ENCODE measurements at regions of chr13 and their contacts with region 1.

Region 1: GRCh38 chr13:81171065-81171647 is 830.2 kb upstream of the SPRY2 start:
- DNase-seq: no peak
- H3K4me3 ChIP-seq: no peak overlapping the region
- H3K27ac ChIP-seq: no peak overlapping the region
- H3K27me3 ChIP-seq: no peaks in the 10 kb centered on the region
- CTCF ChIP-seq: peak; percentile 66

Region 2: DNA sequence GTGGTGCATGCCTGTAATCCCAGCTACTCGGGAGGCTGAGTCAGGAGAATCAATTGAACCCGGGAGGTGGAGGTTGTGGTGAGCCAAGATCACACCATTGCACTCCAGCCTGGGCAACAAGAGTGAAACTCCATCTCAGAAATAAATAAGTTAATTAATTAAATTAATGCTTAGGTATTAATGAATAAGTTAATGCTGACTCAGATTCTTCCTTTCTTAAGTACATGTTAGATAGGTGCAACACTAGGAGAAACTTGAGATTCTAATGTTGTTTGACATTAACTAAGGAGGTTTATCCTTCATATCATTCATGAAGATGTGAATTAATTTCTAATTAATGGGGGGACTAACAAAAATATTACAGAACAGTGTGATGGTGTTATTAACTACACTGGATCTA is 17.7 kb before region 1 on chr13:
- CTCF ChIA-PET with region 1: no interaction called
- POLR2A ChIA-PET with region 1: no interaction called
- DNase-seq: no peak
- H3K4me3 ChIP-seq: no peak overlapping the region
- H3K27ac ChIP-seq: no peak overlapping the region
- H3K27me3 ChIP-seq: no peaks in the 10 kb centered on the region
- CTCF ChIP-seq: no peak

Region 3: DNA sequence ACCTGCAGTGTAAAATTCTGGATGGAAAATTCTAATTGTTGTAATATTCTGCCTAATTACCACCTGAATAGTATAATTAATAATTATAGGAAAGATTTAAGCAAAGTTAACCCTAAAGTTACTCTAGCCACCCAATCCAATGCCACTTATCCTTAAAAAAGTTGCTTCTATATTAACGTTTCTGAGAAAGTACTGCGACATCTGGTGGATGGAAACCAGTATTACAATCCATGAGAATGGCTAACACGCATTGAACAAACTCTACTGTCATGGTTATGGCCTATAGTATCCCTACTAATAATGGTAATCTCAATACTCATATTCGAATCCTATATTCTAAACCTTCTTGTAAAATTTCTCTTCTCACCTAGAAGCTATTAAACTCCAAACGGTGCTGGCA is 1159.3 kb after region 1 on chr13:
- CTCF ChIA-PET with region 1: interaction called, 27 read pairs
- POLR2A ChIA-PET with region 1: no interaction called
- DNase-seq: no peak
- H3K4me3 ChIP-seq: no peak overlapping the region
- H3K27ac ChIP-seq: no peak overlapping the region
- H3K27me3 ChIP-seq: no peaks in the 10 kb centered on the region
- CTCF ChIP-seq: peak; percentile 52